ENCODE measurements at regions of chr19 and their contacts with region 1.

Region 1: GRCh38 chr19:57819475-57820148 is 4.9 kb upstream of the ZNF552 start:
- DNase-seq: peak; percentile 94
- H3K4me3 Mint-ChIP-seq: peak overlapping the region; percentile 85
- H3K27ac Mint-ChIP-seq: peak overlapping the region; percentile 90
- H3K4me1 Mint-ChIP-seq: peaks cover 27% of the 10 kb centered on the region
- H3K27me3 Mint-ChIP-seq: no peaks in the 10 kb centered on the region
- CTCF ChIP-seq: no peak

Region 2: DNA sequence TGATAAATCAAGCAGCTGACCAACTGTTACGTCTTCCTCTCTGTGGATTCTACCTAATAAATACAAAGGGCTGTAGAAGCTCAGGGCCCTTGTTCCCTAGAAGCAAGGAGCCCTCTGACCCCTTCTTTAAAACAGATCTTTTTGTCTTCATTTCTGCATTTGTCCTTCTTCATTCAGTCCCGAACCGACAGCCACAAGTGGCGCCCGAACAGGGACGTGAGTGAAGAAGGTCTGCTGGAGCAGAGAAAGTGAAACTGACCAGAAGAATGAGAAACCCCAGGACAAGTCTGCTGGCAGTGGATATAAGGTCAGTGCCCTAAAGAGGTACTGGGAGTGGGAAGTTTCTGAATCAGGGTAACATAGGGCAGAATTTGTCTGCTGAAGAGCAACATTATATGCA is 306.8 kb before region 1 on chr19:
- CTCF ChIA-PET with region 1: no interaction called
- POLR2A ChIA-PET with region 1: no interaction called
- intact Hi-C with region 1: no loop called
- DNase-seq: no peak
- H3K4me3 Mint-ChIP-seq: no peak overlapping the region
- H3K27ac Mint-ChIP-seq: no peak overlapping the region
- H3K4me1 Mint-ChIP-seq: no peaks in the 10 kb centered on the region
- H3K27me3 Mint-ChIP-seq: no peaks in the 10 kb centered on the region
- CTCF ChIP-seq: no peak

Region 3: DNA sequence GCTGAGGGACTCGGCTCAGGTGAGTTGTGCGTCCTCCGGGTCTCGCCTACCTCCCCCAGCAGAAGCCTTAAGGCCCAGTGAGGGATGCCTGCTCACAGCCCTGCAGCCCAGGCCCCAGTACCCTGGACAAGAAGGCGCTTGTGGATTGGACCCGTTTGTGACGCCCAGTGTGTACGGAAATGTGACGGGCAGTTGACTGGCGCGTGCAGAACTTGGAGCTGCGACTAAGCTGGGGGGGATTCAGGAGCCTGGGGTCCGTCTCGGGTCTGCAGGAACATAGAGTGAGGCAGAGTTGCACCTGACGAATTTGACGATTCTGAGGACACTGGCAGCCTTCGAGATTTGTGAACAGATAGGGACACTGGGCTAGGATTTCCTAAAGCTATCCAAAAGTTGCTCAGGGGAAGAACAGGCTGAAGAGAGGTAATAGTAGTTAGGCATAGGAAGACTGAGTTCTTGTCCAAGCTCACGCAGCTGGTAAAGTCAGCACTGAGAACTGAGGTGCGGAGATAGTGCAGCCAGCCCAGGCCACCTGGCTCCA is 137.3 kb before region 1 on chr19:
- CTCF ChIA-PET with region 1: no interaction called
- POLR2A ChIA-PET with region 1: interaction called, 10 read pairs
- intact Hi-C with region 1: loop called (anchors 5 kb)
- DNase-seq: no peak
- H3K4me3 Mint-ChIP-seq: peak overlapping the region; percentile 94
- H3K27ac Mint-ChIP-seq: peak overlapping the region; percentile 88
- H3K4me1 Mint-ChIP-seq: peaks cover 24% of the 10 kb centered on the region
- H3K27me3 Mint-ChIP-seq: no peaks in the 10 kb centered on the region
- CTCF ChIP-seq: no peak

Region 4: GRCh38 chr19:57746580-57747471 is 72.8 kb before region 1 on chr19 and contains the start of gene ZNF776:
- CTCF ChIA-PET with region 1: interaction called, 3 read pairs
- POLR2A ChIA-PET with region 1: interaction called, 12 read pairs
- intact Hi-C with region 1: loop called (anchors 1 kb)
- DNase-seq: peak; percentile 95
- H3K4me3 Mint-ChIP-seq: peak within 1 kb of the TSS; percentile 99
- H3K27ac Mint-ChIP-seq: peak within 1 kb of the TSS; percentile 99
- H3K4me1 Mint-ChIP-seq: peaks cover 11% of the 10 kb centered on the region
- H3K27me3 Mint-ChIP-seq: no peaks in the 10 kb centered on the region
- CTCF ChIP-seq: no peak
- total RNA-seq, gene ZNF776: 9.9 and 13.3 TPM in 2 replicates

Region 5: DNA sequence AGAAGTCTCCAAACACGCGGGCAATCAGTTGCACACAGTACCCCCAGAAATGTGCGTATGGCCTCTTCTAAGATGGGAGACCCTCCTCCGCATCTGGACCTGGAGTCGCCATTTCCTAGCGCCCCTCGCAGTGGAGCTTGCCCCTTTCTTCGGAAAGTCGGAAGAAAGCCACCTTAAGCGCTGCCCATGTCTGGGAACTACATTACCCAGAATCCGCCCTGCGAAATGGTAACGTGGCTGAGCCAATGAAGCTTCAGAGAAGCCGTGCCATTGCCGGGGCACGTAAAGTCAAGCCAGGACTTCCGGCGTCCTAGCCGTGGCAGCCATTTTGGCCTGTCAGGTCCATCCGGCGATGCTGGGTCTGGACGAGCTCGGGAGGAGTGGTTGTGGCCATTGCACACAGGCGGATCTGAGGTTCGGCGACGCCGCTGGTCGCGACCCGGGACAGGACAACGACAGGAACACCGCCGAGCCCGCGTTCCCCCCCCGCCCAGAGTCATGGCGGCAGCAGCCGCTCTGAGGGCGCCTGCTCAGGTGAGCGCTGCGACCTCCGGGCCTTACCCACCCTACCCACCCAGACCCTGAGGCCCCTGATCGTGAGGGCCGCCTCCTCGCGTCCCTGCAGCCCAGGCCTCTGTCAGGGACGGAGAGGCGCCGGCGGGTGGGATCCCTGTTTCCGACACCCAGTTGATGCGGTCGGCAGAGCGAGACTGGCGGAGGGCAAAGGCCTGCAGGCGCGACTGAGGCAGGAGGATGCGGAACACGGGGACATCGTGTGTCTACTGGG is 50.1 kb before region 1 on chr19 and contains the start of gene ZNF586:
- CTCF ChIA-PET with region 1: no interaction called
- POLR2A ChIA-PET with region 1: interaction called, 12 read pairs
- intact Hi-C with region 1: no loop called
- DNase-seq: peak; percentile 93
- H3K4me3 Mint-ChIP-seq: peak within 1 kb of the TSS; percentile 84
- H3K27ac Mint-ChIP-seq: peak within 1 kb of the TSS; percentile 73
- H3K4me1 Mint-ChIP-seq: peaks cover 10% of the 10 kb centered on the region
- H3K27me3 Mint-ChIP-seq: no peaks in the 10 kb centered on the region
- CTCF ChIP-seq: no peak
- total RNA-seq, gene ZNF586: 13.4 and 13.9 TPM in 2 replicates

Region 6: GRCh38 chr19:57803594-57804325 is 15.9 kb before region 1 on chr19:
- CTCF ChIA-PET with region 1: interaction called, 4 read pairs
- POLR2A ChIA-PET with region 1: interaction called, 65 read pairs
- intact Hi-C with region 1: loop called (anchors 1 kb)
- DNase-seq: peak; percentile 62
- H3K4me3 Mint-ChIP-seq: peak overlapping the region; percentile 82
- H3K27ac Mint-ChIP-seq: peak overlapping the region; percentile 94
- H3K4me1 Mint-ChIP-seq: peaks cover 42% of the 10 kb centered on the region
- H3K27me3 Mint-ChIP-seq: no peaks in the 10 kb centered on the region
- CTCF ChIP-seq: no peak

Measured in MCF 10A (cell line).